ENCODE measurements at regions of chr17 and their contacts with region 1.

Region 1: GRCh38 chr17:50478391-50479381 is at the start of gene RSAD1:
- DNase-seq: peak; percentile 89
- ATAC-seq: peak; percentile 95
- H3K4me3 Mint-ChIP-seq: peak within 1 kb of the TSS; percentile 83
- H3K27ac Mint-ChIP-seq: peak within 1 kb of the TSS; percentile 72
- H3K4me1 Mint-ChIP-seq: peaks cover 27% of the 10 kb centered on the region
- H3K27me3 Mint-ChIP-seq: no peaks in the 10 kb centered on the region
- total RNA-seq, gene RSAD1: 30.3 to 33.2 TPM

Region 2: GRCh38 chr17:50361561-50362480 is 116.9 kb before region 1 on chr17:
- CTCF ChIA-PET with region 1: interaction called, 12 read pairs
- DNase-seq: peak; percentile 77
- ATAC-seq: peak; percentile 82
- H3K4me3 Mint-ChIP-seq: no peak overlapping the region
- H3K27ac Mint-ChIP-seq: peak overlapping the region; percentile 73
- H3K4me1 Mint-ChIP-seq: peaks cover 18% of the 10 kb centered on the region
- H3K27me3 Mint-ChIP-seq: no peaks in the 10 kb centered on the region

Region 3: GRCh38 chr17:50380369-50381259 is 98.1 kb before region 1 on chr17:
- CTCF ChIA-PET with region 1: no interaction called
- DNase-seq: no peak
- ATAC-seq: no peak
- H3K4me3 Mint-ChIP-seq: no peak overlapping the region
- H3K27ac Mint-ChIP-seq: no peak overlapping the region
- H3K4me1 Mint-ChIP-seq: peaks cover 9% of the 10 kb centered on the region
- H3K27me3 Mint-ChIP-seq: no peaks in the 10 kb centered on the region

Region 4: DNA sequence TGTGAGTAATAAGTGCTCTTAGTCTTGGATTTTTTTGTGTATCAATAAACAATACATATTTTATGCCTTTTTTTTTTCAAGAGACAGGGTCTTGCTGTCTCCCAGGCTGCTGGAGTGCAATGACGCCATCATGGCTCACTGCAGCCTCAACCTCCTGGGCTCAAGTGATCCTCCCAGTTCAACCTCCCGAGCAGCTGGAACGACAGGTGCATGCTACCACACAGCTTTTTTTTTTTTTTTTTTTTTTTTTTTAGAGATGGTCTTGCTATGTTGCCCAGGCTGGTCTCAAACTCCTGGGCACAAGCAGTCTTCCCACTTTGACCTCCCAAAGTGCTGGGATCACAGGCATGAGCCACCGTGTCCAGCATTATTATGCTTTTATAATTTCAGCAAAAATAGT is 39.7 kb before region 1 on chr17:
- CTCF ChIA-PET with region 1: no interaction called
- DNase-seq: no peak
- ATAC-seq: no peak
- H3K4me3 Mint-ChIP-seq: no peak overlapping the region
- H3K27ac Mint-ChIP-seq: no peak overlapping the region
- H3K4me1 Mint-ChIP-seq: no peaks in the 10 kb centered on the region
- H3K27me3 Mint-ChIP-seq: no peaks in the 10 kb centered on the region

Region 5: DNA sequence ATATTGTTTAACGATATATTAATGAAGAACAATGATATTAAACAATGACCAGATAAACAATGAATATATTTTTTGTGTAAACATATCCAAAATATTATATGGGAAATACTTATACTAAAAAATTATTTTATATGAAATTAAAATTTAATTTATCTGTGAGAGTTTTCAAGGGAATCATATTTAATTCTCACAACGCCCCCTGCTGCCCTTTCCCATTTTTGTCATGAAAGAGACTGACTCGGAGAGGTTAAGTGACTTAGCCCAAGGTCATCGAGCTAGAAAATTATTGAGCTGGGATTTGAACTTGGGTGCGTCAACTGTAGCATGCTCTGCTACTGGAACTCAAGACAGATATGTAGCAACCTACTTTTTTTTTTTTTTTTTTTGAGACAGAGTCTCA is 22.4 kb after region 1 on chr17:
- CTCF ChIA-PET with region 1: interaction called, 19 read pairs
- DNase-seq: peak; percentile 52
- ATAC-seq: no peak
- H3K4me3 Mint-ChIP-seq: no peak overlapping the region
- H3K27ac Mint-ChIP-seq: no peak overlapping the region
- H3K4me1 Mint-ChIP-seq: peaks cover 23% of the 10 kb centered on the region
- H3K27me3 Mint-ChIP-seq: peaks cover 9% of the 10 kb centered on the region

Region 6: DNA sequence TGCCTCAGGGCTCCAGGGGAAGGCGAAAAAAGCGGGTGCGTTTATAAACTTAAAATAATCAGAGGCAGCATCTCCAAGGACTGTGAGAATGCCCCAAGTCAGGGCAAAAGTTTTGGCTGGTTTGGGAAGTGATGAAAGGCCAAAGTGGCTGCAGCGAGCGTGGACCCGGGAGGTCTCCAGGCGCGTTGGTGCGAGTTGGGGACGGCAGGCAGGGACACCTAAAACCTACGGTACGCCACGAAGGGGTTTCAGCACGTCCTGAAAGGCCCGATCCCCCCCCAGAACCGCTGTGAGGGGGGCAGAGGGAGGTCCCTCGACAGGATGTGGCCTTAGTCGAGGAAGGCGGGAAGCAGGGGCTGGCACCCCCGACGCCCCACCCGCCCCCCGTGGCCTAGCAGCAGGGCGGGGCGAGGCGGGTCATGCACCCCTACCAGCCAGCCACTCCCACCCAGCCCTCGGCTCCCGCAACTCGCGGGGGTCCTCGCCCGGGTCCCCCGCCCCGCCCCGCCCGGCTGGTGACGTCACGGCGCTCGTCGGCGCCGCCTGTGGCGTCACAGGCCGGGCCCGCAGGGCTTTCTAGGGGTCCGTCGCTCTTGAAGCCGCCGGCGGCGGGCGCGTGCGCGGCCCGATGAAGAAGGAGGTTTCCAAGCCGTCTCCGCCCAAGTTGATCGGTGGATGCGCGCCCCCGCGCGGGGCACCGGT is 29.3 kb after region 1 on chr17 and contains the start of gene MYCBPAP:
- CTCF ChIA-PET with region 1: interaction called, 10 read pairs
- DNase-seq: peak; percentile 91
- ATAC-seq: peak; percentile 75
- H3K4me3 Mint-ChIP-seq: peak within 1 kb of the TSS; percentile 87
- H3K27ac Mint-ChIP-seq: peak within 1 kb of the TSS; percentile 85
- H3K4me1 Mint-ChIP-seq: peaks cover 52% of the 10 kb centered on the region
- H3K27me3 Mint-ChIP-seq: peaks cover 6% of the 10 kb centered on the region
- total RNA-seq, gene MYCBPAP: 6.7 to 13.9 TPM

Region 7: DNA sequence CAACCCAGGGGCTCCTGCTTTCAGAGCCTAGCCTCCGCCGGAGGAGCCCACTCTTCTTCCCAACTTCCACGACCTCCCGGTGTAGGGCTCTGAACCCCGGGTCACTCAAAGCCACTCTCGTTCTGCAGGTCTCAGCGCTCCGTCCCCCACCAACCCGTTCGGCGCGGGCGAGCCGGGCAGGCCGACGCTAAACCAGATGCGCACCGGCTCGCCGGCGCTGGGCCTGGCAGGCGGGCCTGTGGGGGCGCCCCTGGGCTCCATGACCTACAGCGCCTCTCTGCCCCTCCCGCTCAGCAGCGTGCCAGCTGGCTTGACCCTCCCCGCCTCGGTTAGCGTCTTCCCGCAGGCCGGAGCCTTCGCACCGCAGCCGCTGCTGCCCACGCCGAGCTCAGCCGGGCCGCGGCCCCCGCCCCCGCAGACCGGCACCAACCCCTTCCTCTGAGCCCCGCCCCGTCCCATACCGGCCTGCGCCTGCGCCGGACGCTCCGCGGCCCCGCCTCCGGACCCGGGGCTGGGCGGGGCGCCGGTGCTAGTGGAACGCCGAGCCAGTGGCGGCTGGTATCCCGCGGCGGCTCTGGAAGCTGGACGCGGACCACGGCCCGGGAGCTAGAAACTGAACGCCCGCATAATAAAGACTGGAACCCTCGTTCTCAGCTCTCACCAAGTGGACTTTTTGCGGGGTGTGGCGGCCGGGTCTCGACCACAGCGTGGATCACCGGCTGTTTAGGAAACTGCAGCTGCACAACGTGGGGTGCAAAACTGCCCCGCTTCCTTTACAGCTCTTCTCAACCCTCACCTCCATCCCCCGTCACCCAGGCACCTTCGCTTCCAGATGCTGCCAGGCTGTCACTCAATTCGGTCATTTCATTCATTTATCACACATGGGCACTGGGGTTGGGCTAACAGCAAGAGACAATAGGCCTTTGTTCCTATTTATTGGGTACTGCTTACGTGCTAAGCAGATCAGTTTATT is 63.3 kb after region 1 on chr17:
- CTCF ChIA-PET with region 1: interaction called, 20 read pairs
- DNase-seq: peak; percentile 85
- ATAC-seq: peak; percentile 91
- H3K4me3 Mint-ChIP-seq: peak overlapping the region; percentile 71
- H3K27ac Mint-ChIP-seq: peak overlapping the region; percentile 52
- H3K4me1 Mint-ChIP-seq: peaks cover 12% of the 10 kb centered on the region
- H3K27me3 Mint-ChIP-seq: peaks cover 9% of the 10 kb centered on the region

Region 8: GRCh38 chr17:50626037-50626574 is 147.4 kb after region 1 on chr17:
- CTCF ChIA-PET with region 1: interaction called, 14 read pairs
- DNase-seq: peak; percentile 70
- ATAC-seq: peak; percentile 75
- H3K4me3 Mint-ChIP-seq: no peak overlapping the region
- H3K27ac Mint-ChIP-seq: no peak overlapping the region
- H3K4me1 Mint-ChIP-seq: peaks cover 7% of the 10 kb centered on the region
- H3K27me3 Mint-ChIP-seq: peaks cover 35% of the 10 kb centered on the region

Region 9: GRCh38 chr17:50721194-50722010 is 242.7 kb after region 1 on chr17:
- CTCF ChIA-PET with region 1: no interaction called
- DNase-seq: no peak
- ATAC-seq: no peak
- H3K4me3 Mint-ChIP-seq: peak overlapping the region; percentile 98
- H3K27ac Mint-ChIP-seq: peak overlapping the region; percentile 99
- H3K4me1 Mint-ChIP-seq: peaks cover 39% of the 10 kb centered on the region
- H3K27me3 Mint-ChIP-seq: no peaks in the 10 kb centered on the region